ENCODE measurements at regions of chr17 and their contacts with region 1.

Region 1: GRCh38 chr17:72946156-72946555 is 146.3 kb downstream of the SLC39A11 start:
- DNase-seq: no peak
- H3K4me3 ChIP-seq: no peak overlapping the region
- H3K27ac ChIP-seq: no peak overlapping the region
- H3K4me1 ChIP-seq: no peaks in the 10 kb centered on the region
- H3K27me3 ChIP-seq: no peaks in the 10 kb centered on the region
- CTCF ChIP-seq: no peak
- POLR2A ChIP-seq: no peak

Region 2: GRCh38 chr17:73021771-73022170 is 75.6 kb after region 1 on chr17:
- intact Hi-C with region 1: loop called (anchors 2 kb)
- DNase-seq: no peak
- H3K4me3 ChIP-seq: no peak overlapping the region
- H3K27ac ChIP-seq: no peak overlapping the region
- H3K4me1 ChIP-seq: no peaks in the 10 kb centered on the region
- H3K27me3 ChIP-seq: no peaks in the 10 kb centered on the region
- CTCF ChIP-seq: no peak
- POLR2A ChIP-seq: no peak

Measured in breast epithelium (tissue), 4 donors.